Sciatic nerve (tissue), 2 donors: ENCODE measurements at regions of chr3 and their contacts with region 1.

Region 1: GRCh38 chr3:167575000-167575600 is 78.6 kb downstream of the WDR49 start:
- DNase-seq: no peak
- ATAC-seq: no peak

Region 2: GRCh38 chr3:167602041-167602440 is 26.9 kb after region 1 on chr3:
- intact Hi-C with region 1: loop called (anchors 2 kb)
- DNase-seq: no peak
- ATAC-seq: no peak